Uterus (tissue), 4 donors: ENCODE measurements at regions of chr2 and their contacts with region 1.

Region 1: DNA sequence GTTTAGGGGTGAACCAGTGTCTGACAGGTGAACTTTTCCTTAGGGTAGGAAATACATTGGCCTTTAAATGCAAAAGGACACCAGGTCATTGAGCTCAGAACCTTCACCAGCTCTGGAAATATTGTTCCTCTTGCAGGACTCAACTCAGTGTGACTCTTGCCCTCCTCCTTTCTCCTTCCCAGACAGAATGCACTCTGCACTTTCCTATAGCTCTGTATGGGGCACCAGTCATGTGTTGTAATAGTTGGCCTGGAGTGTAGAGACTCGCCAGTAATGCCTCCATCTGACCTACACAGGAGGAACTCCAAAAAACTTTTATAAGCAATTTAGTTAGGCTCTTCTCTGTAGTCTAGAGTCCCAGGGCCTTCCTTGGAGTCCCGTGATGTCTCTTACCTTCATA is 248.5 kb upstream of the EPAS1 start:
- DNase-seq: no peak
- H3K4me3 ChIP-seq: no peak overlapping the region
- H3K27ac ChIP-seq: no peak overlapping the region
- H3K4me1 ChIP-seq: no peaks in the 10 kb centered on the region
- H3K27me3 ChIP-seq: no peaks in the 10 kb centered on the region
- CTCF ChIP-seq: no peak
- POLR2A ChIP-seq: no peak

Region 2: DNA sequence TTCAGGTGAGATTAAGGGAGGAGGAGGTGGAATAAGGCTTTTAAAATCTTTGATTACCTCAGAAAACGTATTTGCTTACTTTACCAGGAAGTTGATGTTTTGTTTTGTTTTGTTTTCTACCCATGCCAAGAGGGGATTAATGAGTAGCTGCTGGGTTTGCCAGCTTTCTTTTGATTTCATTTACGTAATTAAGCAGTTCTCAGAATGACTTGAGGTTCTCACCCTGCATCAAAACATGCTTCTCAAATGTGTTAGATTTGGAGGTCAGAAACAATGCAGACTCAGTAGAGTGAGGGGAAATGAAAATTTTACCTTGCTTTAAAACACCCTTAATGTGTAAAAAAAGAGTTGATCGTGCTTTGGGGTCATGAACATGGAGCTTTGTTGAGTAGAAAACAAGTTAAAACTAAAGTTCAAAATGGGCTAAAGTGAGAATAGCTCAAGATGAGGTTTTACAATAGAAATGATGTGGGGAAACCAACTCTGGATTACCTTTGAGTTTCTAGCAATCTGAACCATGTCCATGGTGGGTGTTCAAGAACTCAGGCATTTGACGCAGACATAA is 31.4 kb after region 1 on chr2:
- intact Hi-C with region 1: loop called (anchors 2 kb)
- DNase-seq: no peak
- H3K4me3 ChIP-seq: no peak overlapping the region
- H3K27ac ChIP-seq: no peak overlapping the region
- H3K4me1 ChIP-seq: no peaks in the 10 kb centered on the region
- H3K27me3 ChIP-seq: no peaks in the 10 kb centered on the region
- CTCF ChIP-seq: no peak
- POLR2A ChIP-seq: no peak